ENCODE measurements at regions of chr5 and their contacts with region 1.

Region 1: GRCh38 chr5:59483971-59484472 is 409.5 kb downstream of the PDE4D start:
- DNase-seq: no peak
- H3K4me3 Mint-ChIP-seq: no peak overlapping the region
- H3K27ac Mint-ChIP-seq: peak overlapping the region; percentile 75
- H3K4me1 Mint-ChIP-seq: peaks cover 14% of the 10 kb centered on the region
- H3K27me3 Mint-ChIP-seq: peaks cover 4% of the 10 kb centered on the region

Region 2: DNA sequence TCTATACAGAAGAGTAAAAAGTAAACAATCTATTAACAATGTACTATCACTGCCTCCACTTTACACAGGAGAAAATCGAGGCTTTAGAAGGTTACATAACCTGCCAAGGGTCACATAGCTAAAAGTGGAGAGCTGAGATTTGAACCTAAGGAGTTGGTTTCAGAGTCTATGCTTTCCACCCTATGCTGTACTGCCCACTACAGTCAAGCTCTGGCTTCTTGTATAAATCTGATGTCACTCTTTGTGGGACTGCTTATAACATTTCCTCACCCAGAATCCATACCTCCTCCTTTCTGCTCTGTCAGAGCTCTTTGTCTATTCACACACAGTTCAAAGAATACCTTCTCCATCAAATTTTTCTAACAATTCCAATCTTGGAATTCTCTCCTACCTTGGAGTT is 398.0 kb before region 1 on chr5:
- CTCF ChIA-PET with region 1: no interaction called
- POLR2A ChIA-PET with region 1: no interaction called
- intact Hi-C with region 1: no loop called
- DNase-seq: no peak
- H3K4me3 Mint-ChIP-seq: no peak overlapping the region
- H3K27ac Mint-ChIP-seq: no peak overlapping the region
- H3K4me1 Mint-ChIP-seq: no peaks in the 10 kb centered on the region
- H3K27me3 Mint-ChIP-seq: peaks cover 3% of the 10 kb centered on the region

Region 3: DNA sequence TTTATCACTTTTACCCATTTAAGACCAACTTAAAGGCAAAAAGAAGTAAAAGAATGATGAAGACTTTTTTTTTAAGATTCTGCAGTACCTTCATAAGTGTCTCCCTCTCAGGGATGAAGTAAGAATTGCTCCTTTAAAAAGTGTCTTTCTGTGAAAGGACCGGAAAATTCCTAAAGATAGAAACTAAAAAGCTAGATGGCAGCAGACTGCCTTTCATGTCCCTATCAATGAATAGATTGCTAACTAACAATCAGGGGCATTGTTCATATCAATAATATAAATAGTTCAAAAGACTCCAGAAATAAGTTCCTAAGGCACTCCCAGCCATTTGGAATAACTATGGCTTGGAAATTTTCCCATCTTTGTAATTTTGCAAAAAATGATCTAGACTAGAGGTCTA is 148.5 kb before region 1 on chr5:
- CTCF ChIA-PET with region 1: no interaction called
- POLR2A ChIA-PET with region 1: no interaction called
- intact Hi-C with region 1: no loop called
- DNase-seq: no peak
- H3K4me3 Mint-ChIP-seq: no peak overlapping the region
- H3K27ac Mint-ChIP-seq: no peak overlapping the region
- H3K4me1 Mint-ChIP-seq: no peaks in the 10 kb centered on the region
- H3K27me3 Mint-ChIP-seq: peaks cover 8% of the 10 kb centered on the region

Region 4: DNA sequence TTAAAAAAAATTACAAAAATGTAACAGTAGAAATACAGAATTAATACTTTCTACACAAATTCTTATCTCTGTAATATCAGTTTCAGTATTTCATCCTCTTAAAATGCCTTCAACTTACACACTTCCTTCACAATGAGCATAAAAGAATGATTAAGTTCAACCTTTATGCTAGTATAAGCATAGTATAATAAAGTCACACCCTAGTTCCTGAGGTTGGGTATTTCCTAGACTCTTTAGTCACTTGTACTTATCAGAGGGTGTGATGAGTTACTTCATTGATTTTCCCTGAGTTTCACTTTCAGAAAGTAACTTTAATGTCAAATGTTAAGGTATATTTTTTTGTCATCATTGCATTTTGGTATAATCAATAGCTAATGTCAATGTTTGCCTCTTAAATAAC is 107.1 kb after region 1 on chr5:
- CTCF ChIA-PET with region 1: no interaction called
- POLR2A ChIA-PET with region 1: no interaction called
- intact Hi-C with region 1: loop called (anchors 5 kb)
- DNase-seq: no peak
- H3K4me3 Mint-ChIP-seq: no peak overlapping the region
- H3K27ac Mint-ChIP-seq: no peak overlapping the region
- H3K4me1 Mint-ChIP-seq: peaks cover 2% of the 10 kb centered on the region
- H3K27me3 Mint-ChIP-seq: peaks cover 6% of the 10 kb centered on the region